Stomach (tissue), 19 donors: ENCODE measurements at regions of chr1 and their contacts with region 1.

Region 1: DNA sequence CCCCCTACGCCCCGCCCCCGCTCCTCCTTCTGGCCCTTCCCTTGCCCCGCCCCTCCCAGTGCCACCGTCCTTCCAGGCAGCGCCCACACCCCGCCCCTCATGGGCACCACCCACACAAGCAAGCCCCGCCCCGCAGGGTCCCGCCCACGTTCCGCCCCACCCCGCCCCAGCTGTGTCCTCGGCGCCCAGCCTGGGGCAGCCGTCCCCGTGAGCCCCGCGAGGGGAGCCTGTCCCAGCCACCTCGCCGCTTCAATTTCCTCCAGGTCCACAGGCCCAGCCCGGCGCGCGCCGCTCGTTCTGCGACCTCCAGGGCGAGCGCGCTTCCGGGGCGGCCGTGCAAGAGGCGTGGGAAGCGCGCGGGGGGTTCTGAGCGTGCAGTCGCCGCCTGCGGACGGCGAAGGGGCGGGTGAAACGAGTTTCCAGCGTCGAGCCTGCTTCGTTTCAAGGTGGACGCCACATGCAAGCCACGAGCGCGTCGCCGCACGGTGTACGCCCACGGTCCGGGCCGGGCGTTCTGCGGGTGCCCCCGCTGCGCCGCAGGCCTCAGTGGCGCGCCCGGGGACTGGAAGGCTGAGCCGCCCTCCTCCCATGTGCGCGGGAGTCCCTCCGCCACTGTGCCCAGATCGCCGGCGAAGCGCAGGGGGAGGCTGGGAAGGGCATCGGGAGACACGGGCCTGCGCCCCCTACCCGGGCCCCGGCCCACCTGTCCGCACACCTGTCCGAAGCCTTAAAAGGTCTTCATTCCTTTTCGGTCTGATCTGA is 10.8 kb upstream of the FAAP20 start:
- DNase-seq: peak; percentile 98
- H3K4me3 ChIP-seq: peak overlapping the region; percentile 51 to 57 (median 52)
- H3K27ac ChIP-seq: peak overlapping the region; percentile 85 to 93 (median 89)
- H3K4me1 ChIP-seq: peaks cover 58 to 83% (median 77%) of the 10 kb centered on the region in 4 donors
- H3K27me3 ChIP-seq: no peaks in the 10 kb centered on the region
- CTCF ChIP-seq: peak in 1 of 7 experiments; percentile 22
- EP300 ChIP-seq: no peak
- POLR2A ChIP-seq: no peak

Region 2: GRCh38 chr1:2300851-2301606 is 95.7 kb after region 1 on chr1:
- intact Hi-C with region 1: loop called (anchors 10 kb)
- DNase-seq: peak; percentile 74 to 87
- H3K4me3 ChIP-seq: peak overlapping the region; percentile 5 to 32 (median 22)
- H3K27ac ChIP-seq: peak overlapping the region; percentile 60 to 90 (median 83)
- H3K4me1 ChIP-seq: peaks cover 32 to 87% (median 66%) of the 10 kb centered on the region in 4 donors
- H3K27me3 ChIP-seq: no peaks in the 10 kb centered on the region
- CTCF ChIP-seq: no peak
- EP300 ChIP-seq: no peak
- POLR2A ChIP-seq: no peak